Aorta (tissue), 5 donors: ENCODE measurements at regions of chr10 and their contacts with region 1.

Region 1: DNA sequence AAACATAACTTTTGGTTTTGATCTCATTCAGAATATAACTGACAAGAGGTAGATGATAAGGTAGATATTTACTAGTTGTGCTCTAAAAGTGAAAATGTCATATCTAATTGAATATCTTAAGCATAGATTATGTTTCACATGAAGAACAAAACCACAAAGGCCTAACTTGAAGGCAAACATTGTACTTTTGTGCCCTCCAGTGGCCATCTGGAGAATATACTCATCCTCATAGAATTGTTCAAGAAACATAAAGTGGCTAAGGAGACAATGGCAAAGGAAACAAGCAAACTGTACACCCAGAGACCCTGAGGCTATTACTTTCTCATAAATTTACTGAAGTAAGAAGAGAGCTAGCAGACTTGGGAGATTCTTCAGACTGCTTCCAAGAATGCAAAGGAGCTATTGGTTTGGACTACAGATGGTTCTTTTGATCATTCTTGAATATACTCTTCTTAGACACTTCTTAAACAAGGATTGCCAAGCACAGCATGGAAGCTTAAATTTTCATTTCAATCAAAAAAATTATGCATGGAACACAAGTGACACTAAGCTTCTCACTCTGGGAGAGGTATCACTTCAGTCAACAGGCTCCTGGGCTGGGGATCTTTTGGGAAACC is 98.2 kb upstream of the DKK1 start:
- DNase-seq: no peak
- ATAC-seq: peak; percentile 82
- H3K4me3 ChIP-seq: no peak overlapping the region
- H3K27ac ChIP-seq: no peak overlapping the region
- H3K4me1 ChIP-seq: peaks cover 2 to 3% of the 10 kb centered on the region in 2 donors
- H3K27me3 ChIP-seq: no peaks in the 10 kb centered on the region

Region 2: GRCh38 chr10:50988792-50989191 is 1227.1 kb before region 1 on chr10:
- intact Hi-C with region 1: loop called in 1 of 2 experiments (anchors 5 kb)
- DNase-seq: no peak
- ATAC-seq: no peak
- H3K4me3 ChIP-seq: peak overlapping the region; percentile 37 to 92
- H3K27ac ChIP-seq: no peak overlapping the region
- H3K4me1 ChIP-seq: no peaks in the 10 kb centered on the region
- H3K27me3 ChIP-seq: no peaks in the 10 kb centered on the region

Region 3: GRCh38 chr10:51001587-51001986 is 1214.3 kb before region 1 on chr10:
- intact Hi-C with region 1: loop called in 1 of 2 experiments (anchors 5 kb)
- DNase-seq: no peak
- ATAC-seq: peak; percentile 62
- H3K4me3 ChIP-seq: no peak overlapping the region
- H3K27ac ChIP-seq: peak overlapping the region in 1 of 2 donors; percentile 67
- H3K4me1 ChIP-seq: peaks cover 4 to 7% of the 10 kb centered on the region in 2 donors
- H3K27me3 ChIP-seq: no peaks in the 10 kb centered on the region

Region 4: GRCh38 chr10:51699475-51700227 is 516.2 kb before region 1 on chr10 and contains the start of gene CSTF2T:
- intact Hi-C with region 1: loop called in 1 of 2 experiments (anchors 10 kb)
- DNase-seq: peak; percentile 93
- ATAC-seq: peak; percentile 97
- H3K4me3 ChIP-seq: peak within 1 kb of the TSS; percentile 60 to 98
- H3K27ac ChIP-seq: peak within 1 kb of the TSS; percentile 80 to 99
- H3K4me1 ChIP-seq: peaks cover 0 to 4% of the 10 kb centered on the region in 2 donors
- H3K27me3 ChIP-seq: no peaks in the 10 kb centered on the region
- total RNA-seq, gene CSTF2T: 18.2 to 25.2 TPM

Region 5: DNA sequence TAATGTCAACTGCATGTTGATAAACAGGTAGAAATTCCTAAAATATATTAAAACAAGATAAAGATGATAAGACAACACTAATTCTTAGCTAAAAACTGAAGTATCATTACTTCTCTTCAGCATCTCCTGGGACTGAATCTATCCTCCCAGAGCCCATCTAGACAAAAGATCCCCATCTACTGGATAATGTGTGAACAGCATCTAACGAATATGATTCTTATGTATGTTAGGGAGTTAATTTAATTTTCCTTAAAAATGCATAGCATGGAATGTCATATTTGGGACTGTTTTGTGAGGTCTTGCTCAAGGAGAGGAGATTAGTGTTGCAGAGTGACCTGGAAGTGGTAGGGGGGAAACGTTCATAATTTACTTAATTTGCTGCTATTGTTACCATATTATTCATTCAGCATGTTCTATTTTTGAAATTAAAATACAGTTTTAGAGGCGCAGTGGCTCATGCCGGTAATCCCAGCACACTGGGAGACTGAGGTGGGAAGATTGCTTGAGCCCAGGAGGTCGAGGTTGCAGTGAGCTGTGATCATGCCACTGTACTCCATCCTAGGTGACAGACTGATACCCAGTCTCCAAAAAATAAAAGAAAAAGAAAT is 211.4 kb before region 1 on chr10:
- intact Hi-C with region 1: loop called in 1 of 2 experiments (anchors 10 kb)
- DNase-seq: no peak
- ATAC-seq: no peak
- H3K4me3 ChIP-seq: no peak overlapping the region
- H3K27ac ChIP-seq: no peak overlapping the region
- H3K4me1 ChIP-seq: peaks cover 0 to 1% of the 10 kb centered on the region in 2 donors
- H3K27me3 ChIP-seq: no peaks in the 10 kb centered on the region